Cardiac septum (tissue), 1 donor: ENCODE measurements at regions of chr10 and their contacts with region 1.

Region 1: DNA sequence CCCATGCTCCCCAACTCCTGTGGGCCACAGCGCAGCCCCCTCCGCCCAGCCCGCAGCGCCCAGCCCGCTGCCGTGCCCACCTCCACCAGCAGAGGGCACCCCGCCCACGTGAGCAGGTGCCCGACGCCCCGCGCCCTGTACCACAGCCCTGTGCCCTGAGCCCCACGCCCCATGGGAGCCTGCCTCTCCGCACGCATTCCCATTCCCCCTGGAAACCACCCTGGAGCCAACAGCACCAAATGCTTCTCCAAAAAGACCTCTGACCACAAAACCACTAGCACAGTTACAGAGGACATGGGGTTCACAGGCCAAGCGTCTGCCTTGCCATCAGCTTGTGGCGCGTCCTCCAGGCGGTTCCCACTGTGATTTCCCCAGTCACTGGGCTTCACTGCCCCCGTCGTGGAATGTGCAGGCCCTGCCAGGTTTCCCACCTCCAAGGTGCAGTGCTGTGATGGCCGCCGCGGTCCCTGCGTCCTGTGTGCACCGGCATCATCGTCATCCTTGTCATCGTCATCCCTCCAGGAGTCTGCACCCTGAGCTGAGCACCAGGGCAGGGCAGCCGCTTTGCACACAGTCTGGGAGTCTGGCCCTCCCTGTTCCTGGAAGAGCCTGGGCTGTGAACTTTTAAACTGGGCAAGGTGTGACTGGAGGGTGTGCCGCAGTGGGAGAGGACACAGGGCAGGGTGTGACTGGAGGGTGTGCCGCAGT is 61.7 kb downstream of the PWWP2B start:
- DNase-seq: no peak

Region 2: DNA sequence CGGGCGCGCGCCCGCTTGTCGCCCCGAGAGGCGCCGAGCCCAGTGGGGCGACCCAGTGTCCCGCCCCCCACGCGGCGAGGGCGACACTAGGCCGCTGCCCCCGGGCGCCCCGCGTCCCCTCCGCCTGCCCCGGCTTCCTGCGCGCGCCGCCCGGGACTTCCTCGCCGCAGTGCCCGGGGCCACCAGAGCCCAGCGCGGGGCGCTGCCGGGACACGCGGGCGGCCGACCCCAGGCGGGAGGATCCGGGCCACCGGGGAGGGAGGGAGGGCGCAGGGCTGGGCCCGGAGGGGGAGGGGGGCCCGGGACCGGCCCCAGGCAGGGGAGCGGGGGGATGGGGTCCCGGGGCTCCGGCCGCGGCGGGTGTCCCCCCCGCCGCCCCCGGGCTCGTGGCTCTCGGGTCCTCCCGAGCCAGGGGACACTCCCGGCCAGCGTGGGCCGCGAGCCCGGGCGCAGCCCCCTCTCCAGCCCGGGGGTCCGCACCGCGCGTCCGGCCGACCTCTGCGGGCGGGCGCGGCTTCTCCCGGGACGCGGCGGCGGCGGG is 62.2 kb before region 1 on chr10:
- intact Hi-C with region 1: no loop called
- DNase-seq: no peak

Region 3: GRCh38 chr10:132536971-132537712 is 78.4 kb after region 1 on chr10:
- intact Hi-C with region 1: loop called (anchors 5 kb)
- DNase-seq: peak; percentile 100

Region 4: GRCh38 chr10:132575356-132576201 is 116.8 kb after region 1 on chr10:
- intact Hi-C with region 1: loop called (anchors 2 kb)
- DNase-seq: no peak

Region 5: GRCh38 chr10:132637477-132638129 is 178.9 kb after region 1 on chr10:
- intact Hi-C with region 1: loop called (anchors 2 kb)
- DNase-seq: peak; percentile 62